ENCODE measurements at regions of chr21 and their contacts with region 1.

Region 1: DNA sequence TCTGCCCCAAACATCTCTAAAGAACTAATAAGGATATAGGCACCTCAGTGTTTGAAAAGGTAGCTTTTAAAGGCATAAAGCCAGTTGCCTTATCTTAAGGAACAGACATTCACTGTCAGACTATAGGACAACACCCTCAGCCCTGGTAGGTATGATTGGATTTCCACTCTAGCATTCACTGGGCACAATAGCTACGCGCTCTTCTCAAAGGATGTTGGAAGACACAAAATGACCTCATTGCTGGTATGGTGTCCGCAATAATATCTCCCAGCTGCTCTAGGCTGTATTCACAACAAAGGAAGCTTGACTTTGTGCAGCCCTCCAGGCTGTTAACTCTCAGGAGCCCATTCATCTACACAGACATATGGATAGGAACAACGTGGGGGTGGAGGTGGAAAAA is 119.4 kb upstream of the CXADR start:
- DNase-seq: no peak
- ATAC-seq: no peak
- H3K4me3 ChIP-seq: no peak overlapping the region
- H3K27ac ChIP-seq: no peak overlapping the region
- H3K4me1 ChIP-seq: no peaks in the 10 kb centered on the region
- H3K27me3 ChIP-seq: no peaks in the 10 kb centered on the region
- CTCF ChIP-seq: no peak
- POLR2A ChIP-seq: no peak

Region 2: DNA sequence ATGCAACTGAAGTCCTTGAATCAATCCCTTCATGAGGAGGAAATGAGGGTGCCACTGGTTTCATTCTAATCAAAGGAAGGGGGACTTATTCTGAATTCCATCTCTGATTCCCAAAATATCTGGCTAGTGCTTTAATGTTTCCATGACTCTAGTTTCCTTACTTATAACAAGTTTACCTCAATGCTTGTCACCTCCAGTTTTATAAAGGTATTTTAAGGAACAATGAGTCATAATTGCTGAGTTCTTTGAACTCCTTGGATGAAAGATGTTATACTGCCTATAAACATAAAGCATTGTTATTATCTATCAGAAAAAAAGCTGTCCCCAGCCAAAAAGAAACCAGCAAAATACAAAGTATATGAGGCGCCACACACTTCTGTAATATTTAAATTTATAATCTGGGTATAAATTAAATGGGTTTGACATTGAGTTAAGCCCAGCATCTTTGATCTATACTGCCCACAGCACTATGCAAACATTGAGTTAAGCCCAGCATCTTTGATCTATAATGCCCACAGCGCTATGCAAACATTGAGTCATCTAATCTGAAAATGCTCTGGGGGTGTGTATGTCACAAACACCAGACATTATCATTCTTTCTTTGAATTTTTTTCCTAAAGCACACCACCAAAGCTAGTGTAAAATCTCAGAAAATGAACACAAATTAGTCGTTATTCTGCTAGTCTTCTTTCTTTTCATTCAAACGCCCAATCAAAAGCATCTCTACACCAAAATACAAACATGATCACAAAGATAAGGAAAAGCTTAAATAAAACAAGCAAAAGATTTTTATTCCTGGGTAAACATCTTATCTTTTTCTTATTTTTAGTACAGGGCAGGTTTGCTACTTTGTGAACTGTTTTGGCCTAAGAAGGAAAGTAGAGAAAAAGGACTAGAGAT is 107.9 kb after region 1 on chr21:
- intact Hi-C with region 1: loop called in 1 of 10 experiments (anchors 10 kb)
- DNase-seq: no peak
- ATAC-seq: no peak
- H3K4me3 ChIP-seq: no peak overlapping the region
- H3K27ac ChIP-seq: no peak overlapping the region
- H3K4me1 ChIP-seq: no peaks in the 10 kb centered on the region
- H3K27me3 ChIP-seq: no peaks in the 10 kb centered on the region
- CTCF ChIP-seq: no peak
- POLR2A ChIP-seq: no peak

Measured in heart left ventricle (tissue), 16 donors.